Heart left ventricle (tissue), 16 donors: ENCODE measurements at regions of chr17 and their contacts with region 1.

Region 1: DNA sequence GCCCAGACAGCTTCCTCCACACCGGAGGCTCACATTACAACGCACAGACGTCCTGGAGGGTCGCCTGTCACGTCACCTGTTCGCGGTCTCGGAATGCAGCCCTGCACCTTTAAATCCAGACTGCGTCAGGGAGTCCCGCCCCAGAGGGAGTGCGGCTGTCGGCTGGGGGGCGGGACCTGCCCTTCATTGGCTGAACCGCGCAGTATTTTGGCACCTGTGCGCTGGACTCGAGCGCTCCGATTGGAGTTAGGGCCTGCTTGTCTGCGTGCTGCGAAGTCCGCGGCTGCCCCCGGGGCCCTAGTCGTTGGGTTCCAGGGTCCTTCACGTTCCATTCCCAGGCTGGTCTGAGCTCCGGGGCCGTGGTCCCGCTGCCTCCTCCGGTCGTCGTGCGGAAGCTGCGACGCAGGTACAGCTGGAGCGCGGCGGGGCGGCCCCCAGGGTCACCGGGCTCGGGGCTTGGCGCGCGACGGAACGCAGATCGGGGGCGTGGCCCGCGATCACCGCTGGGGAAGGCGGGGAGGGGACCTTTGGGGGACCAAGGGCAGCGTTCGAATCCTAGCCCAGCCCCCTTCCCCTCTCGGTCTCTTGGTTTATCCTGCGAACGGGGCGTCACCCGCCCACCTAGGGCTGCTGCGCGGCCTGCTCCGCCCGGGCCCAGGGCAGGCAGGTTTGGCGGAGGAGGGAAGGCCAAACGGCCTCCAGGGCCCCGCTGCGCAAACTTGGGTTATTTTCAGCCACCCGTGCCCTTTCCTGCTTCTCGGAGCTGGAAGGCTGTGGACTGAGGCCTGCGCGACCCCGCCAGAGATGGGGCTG is at the start of gene MIEF2:
- DNase-seq: peak; percentile 97 to 98 (median 97)
- ATAC-seq: peak; percentile 82 to 87 (median 87)
- H3K4me3 ChIP-seq: peak within 1 kb of the TSS; percentile 58 to 94 (median 84)
- H3K27ac ChIP-seq: peak within 1 kb of the TSS; percentile 78 to 99 (median 95)
- H3K4me1 ChIP-seq: peaks cover 6 to 62% (median 50%) of the 10 kb centered on the region in 12 donors
- H3K27me3 ChIP-seq: no peaks in the 10 kb centered on the region
- CTCF ChIP-seq: no peak
- POLR2A ChIP-seq: peak; percentile 30 to 62
- total RNA-seq, gene MIEF2: 23.2 to 46.9 (median 26.7) TPM

Region 2: GRCh38 chr17:18056212-18056611 is 204.3 kb before region 1 on chr17:
- intact Hi-C with region 1: no loop called
- DNase-seq: no peak
- ATAC-seq: no peak
- H3K4me3 ChIP-seq: no peak overlapping the region
- H3K27ac ChIP-seq: no peak overlapping the region
- H3K4me1 ChIP-seq: no peaks in the 10 kb centered on the region
- H3K27me3 ChIP-seq: no peaks in the 10 kb centered on the region
- CTCF ChIP-seq: no peak
- POLR2A ChIP-seq: no peak

Region 3: DNA sequence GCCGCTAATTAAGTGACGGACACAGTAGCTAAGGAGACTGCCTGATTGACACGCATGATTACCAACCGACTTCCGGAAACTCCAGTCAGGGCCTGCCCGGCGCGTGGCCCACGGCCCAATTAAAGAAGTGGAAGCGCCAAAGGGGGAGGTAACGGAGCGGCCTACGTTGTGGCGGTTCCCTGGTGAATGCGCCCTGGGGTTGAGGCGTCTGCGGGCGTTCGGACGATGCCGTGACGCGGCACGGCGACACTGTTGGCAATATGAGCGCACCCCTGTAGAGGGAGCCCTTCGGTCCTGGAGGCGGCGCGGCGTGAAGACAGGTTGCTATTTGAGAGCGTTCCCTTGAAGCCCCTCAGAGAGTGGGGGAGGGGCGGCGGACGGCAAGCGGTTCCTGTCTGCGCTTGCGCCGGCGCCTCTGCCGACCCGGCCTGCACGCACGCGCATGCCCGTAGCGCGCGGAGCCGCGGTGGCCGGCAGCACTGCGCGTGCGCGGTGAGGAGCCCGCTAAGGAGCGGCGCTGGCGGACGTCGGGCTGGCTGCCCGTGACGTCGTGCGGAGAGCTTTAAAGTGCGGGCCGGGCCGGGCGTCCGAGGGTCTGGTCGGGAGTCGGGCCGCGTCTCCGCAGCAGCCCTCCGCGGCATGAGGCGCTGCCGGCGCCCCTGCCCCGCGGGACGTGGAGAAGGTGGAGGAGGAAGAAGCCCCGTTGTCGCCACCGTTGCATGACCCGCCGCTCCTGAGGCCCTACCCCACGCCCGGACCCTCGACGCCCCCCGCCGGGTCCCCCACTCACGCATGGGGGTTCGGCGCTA is 77.0 kb before region 1 on chr17 and contains the start of gene ALKBH5:
- intact Hi-C with region 1: loop called in 3 of 10 experiments (anchors 2 to 5 kb)
- DNase-seq: peak; percentile 97 to 99 (median 98)
- ATAC-seq: peak; percentile 91 to 96 (median 94)
- H3K4me3 ChIP-seq: peak within 1 kb of the TSS; percentile 56 to 99 (median 92)
- H3K27ac ChIP-seq: peak within 1 kb of the TSS; percentile 93 to 100 (median 98)
- H3K4me1 ChIP-seq: peaks cover 13 to 66% (median 47%) of the 10 kb centered on the region in 12 donors
- H3K27me3 ChIP-seq: no peaks in the 10 kb centered on the region
- CTCF ChIP-seq: peak in 11 of 12 donors; percentile 2 to 50 (median 28)
- POLR2A ChIP-seq: peak in 1 of 2 donors; percentile 94
- total RNA-seq, gene ALKBH5: 147 to 233 (median 198) TPM

Region 4: GRCh38 chr17:18203308-18203707 is 57.2 kb before region 1 on chr17:
- intact Hi-C with region 1: no loop called
- DNase-seq: no peak
- ATAC-seq: peak in 2 of 4 donors; percentile 8 to 23
- H3K4me3 ChIP-seq: no peak overlapping the region
- H3K27ac ChIP-seq: no peak overlapping the region
- H3K4me1 ChIP-seq: peaks cover 0 to 74% (median 36%) of the 10 kb centered on the region in 12 donors
- H3K27me3 ChIP-seq: no peaks in the 10 kb centered on the region
- CTCF ChIP-seq: no peak
- POLR2A ChIP-seq: no peak

Region 5: DNA sequence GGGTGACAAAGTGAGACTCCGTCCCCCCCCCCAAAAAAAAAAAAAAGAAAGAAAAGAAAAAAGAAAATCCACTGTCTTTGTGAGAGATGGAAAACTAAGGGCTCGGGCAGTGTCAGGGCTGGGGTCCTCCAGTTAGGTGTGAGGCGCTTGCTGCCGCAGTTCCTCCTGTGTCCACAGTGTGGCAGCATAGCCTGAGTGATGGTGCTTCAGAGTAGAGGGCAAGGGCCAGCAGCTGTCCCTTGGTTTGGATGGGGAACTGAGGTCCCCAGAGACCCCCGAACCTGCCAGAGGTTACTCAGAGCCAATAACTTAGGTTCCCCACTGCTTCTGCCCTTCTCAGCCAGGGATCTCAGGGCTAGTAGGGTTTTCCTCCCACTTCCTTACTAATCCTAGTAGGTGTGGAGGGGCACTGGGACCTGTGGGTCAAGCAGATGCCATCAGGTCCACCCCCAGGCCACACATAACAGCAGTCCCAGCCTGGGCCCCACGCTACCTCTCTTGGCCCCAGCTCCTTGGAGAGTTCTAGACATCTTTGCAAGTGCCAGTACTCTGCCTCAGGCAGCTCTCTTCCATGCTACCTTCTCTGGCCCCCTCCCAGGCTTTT is 43.0 kb before region 1 on chr17:
- intact Hi-C with region 1: loop called in 1 of 10 experiments (anchors 2 kb)
- DNase-seq: peak; percentile 60 to 85 (median 74)
- ATAC-seq: peak; percentile 78 to 90 (median 88)
- H3K4me3 ChIP-seq: no peak overlapping the region
- H3K27ac ChIP-seq: no peak overlapping the region
- H3K4me1 ChIP-seq: peaks cover 0 to 15% (median 1%) of the 10 kb centered on the region in 12 donors
- H3K27me3 ChIP-seq: no peaks in the 10 kb centered on the region
- CTCF ChIP-seq: peak; percentile 86 to 92 (median 90)
- POLR2A ChIP-seq: no peak

Region 6: GRCh38 chr17:18225121-18225566 is 35.4 kb before region 1 on chr17:
- intact Hi-C with region 1: loop called in 2 of 10 experiments (anchors 2 kb)
- DNase-seq: peak; percentile 97 to 99 (median 98)
- ATAC-seq: peak; percentile 90 to 98 (median 97)
- H3K4me3 ChIP-seq: peak overlapping the region in 11 of 12 donors; percentile 5 to 87 (median 58)
- H3K27ac ChIP-seq: peak overlapping the region in 10 of 12 donors; percentile 27 to 80 (median 70)
- H3K4me1 ChIP-seq: peaks cover 0 to 25% (median 15%) of the 10 kb centered on the region in 12 donors
- H3K27me3 ChIP-seq: no peaks in the 10 kb centered on the region
- CTCF ChIP-seq: no peak
- POLR2A ChIP-seq: no peak

Region 7: DNA sequence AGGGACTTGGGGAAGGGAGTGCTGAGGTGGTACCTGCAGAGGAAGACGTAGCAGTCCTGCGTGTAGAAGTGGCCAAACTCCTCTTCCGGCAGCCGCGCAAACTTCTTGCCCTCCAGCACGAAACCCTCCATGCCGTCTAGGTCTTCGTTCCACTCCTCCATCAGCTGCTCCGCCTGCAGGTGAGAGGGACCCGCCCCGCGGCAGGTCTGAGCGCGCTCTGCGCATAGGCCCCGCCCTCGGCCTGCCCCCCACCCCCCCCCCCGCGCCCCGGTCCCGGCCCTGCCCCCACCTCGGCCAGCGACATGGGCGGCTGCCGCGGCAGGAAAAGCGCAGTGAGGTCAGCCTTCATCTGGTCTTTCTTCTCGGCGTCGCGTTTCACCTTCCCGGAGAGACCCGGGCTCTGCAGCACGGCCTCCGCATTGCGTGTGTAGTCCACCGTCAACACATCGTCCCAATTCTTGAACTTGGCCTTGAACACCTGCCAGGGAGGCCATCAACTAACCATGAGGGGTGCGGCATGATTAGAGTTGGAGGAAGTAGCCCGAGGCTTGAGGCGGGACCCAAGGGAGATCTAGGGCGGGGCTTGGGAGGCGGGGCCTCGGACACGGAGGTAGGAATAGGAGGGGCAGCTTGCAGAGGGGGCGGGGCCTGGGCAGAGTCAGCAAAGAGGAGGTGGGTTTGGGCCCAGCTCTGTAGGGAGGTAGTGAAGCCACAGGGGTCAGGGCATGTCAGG is 13.5 kb before region 1 on chr17:
- intact Hi-C with region 1: loop called in 1 of 10 experiments (anchors 2 kb)
- DNase-seq: peak in 4 of 5 donors; percentile 47 to 67 (median 62)
- ATAC-seq: peak in 3 of 4 donors; percentile 33 to 62 (median 42)
- H3K4me3 ChIP-seq: no peak overlapping the region
- H3K27ac ChIP-seq: peak overlapping the region in 10 of 12 donors; percentile 24 to 88 (median 74)
- H3K4me1 ChIP-seq: peaks cover 0 to 28% (median 23%) of the 10 kb centered on the region in 12 donors
- H3K27me3 ChIP-seq: no peaks in the 10 kb centered on the region
- CTCF ChIP-seq: no peak
- POLR2A ChIP-seq: no peak